CD4-positive, alpha-beta T cell (primary cell): ENCODE measurements at regions of chr5 and their contacts with region 1.

Region 1: DNA sequence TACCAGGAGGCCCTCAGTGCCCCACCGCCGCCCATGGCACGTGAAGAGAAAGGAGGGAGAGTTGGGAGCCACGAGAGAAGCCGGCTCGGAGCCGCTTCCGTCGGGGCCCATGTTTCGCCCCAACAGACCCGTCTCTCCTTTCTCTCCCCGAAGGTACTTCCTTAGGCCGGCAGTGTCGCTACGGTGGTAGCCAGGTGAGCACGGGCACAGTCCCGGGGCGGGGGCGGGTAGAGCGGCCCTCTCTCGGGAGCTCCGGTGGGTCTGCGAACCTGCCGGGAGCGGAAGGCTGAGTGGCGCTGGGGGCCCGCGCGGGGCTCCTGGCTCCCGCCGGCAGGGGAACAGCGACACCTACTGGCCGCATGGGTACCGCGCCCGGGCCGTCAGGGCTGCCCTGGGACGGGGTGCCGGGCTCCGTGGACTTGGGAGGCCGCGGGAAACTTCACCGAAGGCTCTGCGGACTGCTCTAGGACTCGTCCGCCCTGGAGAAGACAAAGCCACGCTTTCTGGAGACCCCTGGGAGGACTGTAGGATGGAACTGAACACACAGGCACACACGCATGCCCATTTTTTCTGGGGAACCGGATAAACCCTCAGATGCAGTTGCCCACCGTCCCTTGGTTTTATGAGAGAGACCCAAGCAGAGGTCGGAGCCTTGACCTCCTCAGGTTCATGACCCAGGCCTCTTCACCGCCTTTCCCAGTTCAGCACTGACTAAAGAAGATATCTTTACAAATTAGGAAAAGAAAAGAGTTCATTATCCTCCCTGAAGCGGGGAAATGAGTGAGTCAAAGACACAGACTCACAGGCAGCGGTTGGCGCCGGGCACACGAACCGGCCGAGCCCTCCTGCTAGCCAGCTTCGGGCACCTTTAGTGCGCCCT is 202.5 kb downstream of the MEF2C start:
- DNase-seq: peak; percentile 53 to 87 (median 67)
- ATAC-seq: peak; percentile 85
- H3K4me3 ChIP-seq: peak overlapping the region; percentile 40
- H3K4me3 Mint-ChIP-seq: peak overlapping the region; percentile 44
- H3K27ac ChIP-seq: no peak overlapping the region
- H3K27ac Mint-ChIP-seq: no peak overlapping the region
- H3K4me1 ChIP-seq: peaks cover 40% of the 10 kb centered on the region
- H3K4me1 Mint-ChIP-seq: peaks cover 25% of the 10 kb centered on the region
- H3K27me3 ChIP-seq: peaks cover 83 to 96% of the 10 kb centered on the region in 2 experiments
- H3K27me3 Mint-ChIP-seq: peaks cover 91% of the 10 kb centered on the region
- CTCF ChIP-seq: peak; percentile 93

Region 2: GRCh38 chr5:87780831-87781760 is 899.4 kb before region 1 on chr5:
- CTCF ChIA-PET with region 1: interaction called, 7 read pairs
- POLR2A ChIA-PET with region 1: interaction called, 3 read pairs
- intact Hi-C with region 1: loop called (anchors 1 kb)
- DNase-seq: peak; percentile 52 to 88 (median 69)
- ATAC-seq: peak; percentile 94
- H3K4me3 ChIP-seq: no peak overlapping the region
- H3K4me3 Mint-ChIP-seq: no peak overlapping the region
- H3K27ac ChIP-seq: no peak overlapping the region
- H3K27ac Mint-ChIP-seq: no peak overlapping the region
- H3K4me1 ChIP-seq: no peaks in the 10 kb centered on the region
- H3K4me1 Mint-ChIP-seq: peaks cover 4% of the 10 kb centered on the region
- H3K27me3 ChIP-seq: peaks cover 1 to 33% of the 10 kb centered on the region in 2 experiments
- H3K27me3 Mint-ChIP-seq: peaks cover 37% of the 10 kb centered on the region
- CTCF ChIP-seq: peak; percentile 94

Region 3: DNA sequence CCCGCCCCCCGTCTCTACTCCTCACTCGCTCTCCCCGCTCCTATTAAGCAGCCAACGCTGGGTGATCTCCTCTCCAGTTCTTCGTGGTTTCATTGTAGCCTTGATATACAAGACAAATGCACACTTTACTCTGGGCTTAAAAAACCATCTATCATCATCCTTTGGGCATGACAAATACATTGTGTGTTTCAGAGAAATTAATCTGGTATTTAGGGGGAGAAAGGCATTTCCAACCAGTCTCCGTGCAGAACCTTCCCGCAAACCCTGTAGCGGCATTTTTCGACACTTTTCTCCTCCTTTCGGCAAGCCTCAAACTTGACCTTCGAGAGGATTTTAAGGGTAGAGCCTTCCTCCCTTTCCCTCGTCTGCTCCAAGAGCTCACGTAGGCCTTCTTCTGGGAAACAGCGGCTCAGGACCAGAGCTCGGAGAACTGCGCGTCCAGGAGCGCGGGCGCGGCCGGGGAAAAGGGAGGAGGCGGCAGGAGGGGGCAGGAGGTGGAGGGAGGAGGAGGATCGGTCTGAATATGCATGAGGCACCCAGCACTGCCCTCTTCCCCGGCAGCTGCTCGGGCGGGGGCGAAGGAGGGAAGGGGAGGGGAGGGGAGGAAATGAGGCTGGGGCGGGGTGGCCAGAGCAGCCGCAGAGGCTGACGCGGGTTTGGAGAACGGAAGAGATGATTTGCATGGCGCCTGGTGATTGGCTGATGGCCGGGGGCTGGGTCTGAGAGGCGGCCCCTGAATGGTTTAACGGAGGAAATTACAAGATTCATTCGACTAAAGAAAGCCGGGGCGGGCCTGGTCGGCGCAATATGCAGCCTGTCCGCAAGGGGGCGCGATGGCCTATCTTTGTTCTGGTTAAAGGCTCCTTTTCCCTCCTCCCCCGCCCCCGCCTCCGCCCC is 539.4 kb before region 1 on chr5:
- CTCF ChIA-PET with region 1: no interaction called
- POLR2A ChIA-PET with region 1: no interaction called
- intact Hi-C with region 1: loop called (anchors 5 kb)
- DNase-seq: peak; percentile 38 to 92 (median 68)
- ATAC-seq: peak; percentile 89
- H3K4me3 ChIP-seq: peak overlapping the region; percentile 42
- H3K4me3 Mint-ChIP-seq: no peak overlapping the region
- H3K27ac ChIP-seq: no peak overlapping the region
- H3K27ac Mint-ChIP-seq: no peak overlapping the region
- H3K4me1 ChIP-seq: peaks cover 54% of the 10 kb centered on the region
- H3K4me1 Mint-ChIP-seq: peaks cover 8% of the 10 kb centered on the region
- H3K27me3 ChIP-seq: peaks cover 61 to 82% of the 10 kb centered on the region in 2 experiments
- H3K27me3 Mint-ChIP-seq: peaks cover 25% of the 10 kb centered on the region
- CTCF ChIP-seq: no peak

Region 4: GRCh38 chr5:88756953-88757352 is 76.5 kb after region 1 on chr5:
- CTCF ChIA-PET with region 1: no interaction called
- POLR2A ChIA-PET with region 1: no interaction called
- intact Hi-C with region 1: no loop called
- DNase-seq: no peak
- ATAC-seq: no peak
- H3K4me3 ChIP-seq: no peak overlapping the region
- H3K4me3 Mint-ChIP-seq: no peak overlapping the region
- H3K27ac ChIP-seq: no peak overlapping the region
- H3K27ac Mint-ChIP-seq: no peak overlapping the region
- H3K4me1 ChIP-seq: no peaks in the 10 kb centered on the region
- H3K4me1 Mint-ChIP-seq: peaks cover 2% of the 10 kb centered on the region
- H3K27me3 ChIP-seq: peaks cover 0 to 9% of the 10 kb centered on the region in 2 experiments
- H3K27me3 Mint-ChIP-seq: peaks cover 5% of the 10 kb centered on the region
- CTCF ChIP-seq: no peak